ENCODE measurements at regions of chr16 and their contacts with region 1.

Region 1: DNA sequence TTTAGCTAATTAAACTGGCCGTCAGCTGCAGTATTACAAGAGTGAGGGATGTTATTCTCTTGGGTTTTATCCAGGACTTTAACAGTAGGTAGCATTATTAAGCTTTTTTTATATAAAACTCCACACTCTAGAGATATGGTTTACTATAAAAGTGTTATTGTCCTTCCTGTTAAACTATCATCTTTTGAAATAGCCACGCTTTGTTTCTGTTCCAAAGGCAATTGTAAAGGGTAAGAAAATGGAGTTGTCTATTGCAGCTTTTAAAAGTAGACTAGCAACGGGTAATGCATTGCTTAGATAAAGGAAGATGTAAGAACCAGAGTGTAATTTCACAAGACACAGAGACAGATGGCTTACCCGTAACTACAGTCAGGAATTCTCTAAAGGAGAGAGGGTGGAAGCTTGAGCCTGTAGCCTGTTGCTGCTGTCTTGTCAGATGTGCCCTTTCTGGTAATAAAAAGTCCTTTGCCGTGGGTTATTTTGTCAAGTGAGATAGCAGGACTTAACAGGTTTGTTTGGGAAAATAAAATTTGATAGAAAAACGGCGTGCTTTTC is 56.4 kb downstream of the WWOX start:
- ATAC-seq: peak in 2 of 8 experiments; percentile 27 to 86
- H3K4me3 ChIP-seq: no peak overlapping the region
- H3K27ac ChIP-seq: no peak overlapping the region
- H3K4me1 ChIP-seq: no peaks in the 10 kb centered on the region

Region 2: GRCh38 chr16:78099372-78100161 is 56.3 kb before region 1 on chr16 and contains the start of gene WWOX:
- in situ Hi-C with region 1: no loop called
- ATAC-seq: peak; percentile 95 to 96 (median 96)
- H3K4me3 ChIP-seq: peak within 1 kb of the TSS; percentile 54 to 78 (median 67)
- H3K27ac ChIP-seq: peak within 1 kb of the TSS; percentile 10 to 18
- H3K4me1 ChIP-seq: no peaks in the 10 kb centered on the region
- total RNA-seq, gene WWOX: 10.3 to 27.8 (median 12.3) TPM

Region 3: GRCh38 chr16:78209951-78210661 is 54.2 kb after region 1 on chr16:
- in situ Hi-C with region 1: loop called in 1 of 9 experiments (anchors 10 kb)
- ATAC-seq: peak in 7 of 8 experiments; percentile 28 to 83 (median 49)
- H3K4me3 ChIP-seq: no peak overlapping the region
- H3K27ac ChIP-seq: no peak overlapping the region
- H3K4me1 ChIP-seq: peaks cover 8% of the 10 kb centered on the region in 2 donors

Region 4: DNA sequence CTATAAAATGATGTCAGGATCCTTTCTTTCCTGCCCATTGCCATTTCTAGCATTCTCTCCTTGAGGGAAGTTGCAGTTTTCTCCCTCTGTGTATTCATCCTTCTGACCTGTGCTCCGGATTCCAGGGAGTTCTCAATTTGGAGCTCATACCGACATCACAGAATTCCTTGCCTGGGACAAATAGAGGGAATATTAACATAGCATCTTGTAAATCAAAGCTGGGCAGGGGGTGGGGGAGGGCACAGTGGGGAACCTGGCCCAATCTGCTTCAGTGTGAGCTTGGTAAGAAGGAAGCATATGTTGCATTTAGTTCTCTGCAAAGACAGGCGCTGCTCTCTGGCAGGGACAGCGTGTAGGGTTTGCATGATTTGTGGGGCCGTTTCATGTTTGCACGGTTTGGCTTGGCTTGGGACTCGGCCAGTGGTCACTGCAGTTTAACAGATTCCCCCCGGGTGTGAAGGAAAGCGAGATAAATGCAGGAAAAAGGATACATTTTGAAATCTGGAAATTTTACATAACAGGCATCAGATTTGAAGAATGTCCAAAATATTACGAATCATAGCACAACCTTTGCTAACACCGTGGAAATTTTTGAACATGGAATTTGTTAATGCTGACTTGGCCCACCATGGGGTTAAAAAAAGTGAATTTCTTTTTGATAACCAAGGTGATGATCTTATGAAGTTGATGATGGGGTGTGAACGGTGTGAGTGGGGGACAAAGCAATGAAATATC is 121.6 kb after region 1 on chr16:
- in situ Hi-C with region 1: no loop called
- ATAC-seq: peak in 6 of 8 experiments; percentile 41 to 95 (median 81)
- H3K4me3 ChIP-seq: no peak overlapping the region
- H3K27ac ChIP-seq: no peak overlapping the region
- H3K4me1 ChIP-seq: peaks cover 30 to 37% of the 10 kb centered on the region in 2 donors

Measured in motor neuron (in vitro differentiated cells).